HCT116 (cell line): ENCODE measurements at regions of chr13 and their contacts with region 1.

Region 1: GRCh38 chr13:79423801-79424642 is 18.0 kb upstream of the RBM26 start:
- DNase-seq: peak; percentile 28
- ATAC-seq: peak; percentile 61
- H3K4me3 ChIP-seq: no peak overlapping the region
- H3K27ac ChIP-seq: no peak overlapping the region
- H3K4me1 ChIP-seq: no peaks in the 10 kb centered on the region
- H3K27me3 ChIP-seq: no peaks in the 10 kb centered on the region
- CTCF ChIP-seq: peak; percentile 44 to 58 (median 53); a peak in 4 of 6 replicates
- POLR2A ChIP-seq: no peak
- RAD21 ChIP-seq: peak; percentile 67

Region 2: GRCh38 chr13:79480954-79481684 is 57.1 kb after region 1 on chr13 and contains the start of gene NDFIP2:
- CTCF ChIA-PET with region 1: interaction called, 10 read pairs
- POLR2A ChIA-PET with region 1: no interaction called
- RAD21 ChIA-PET with region 1: interaction called in 1 of 2 experiments, 3 read pairs
- intact Hi-C with region 1: no loop called
- DNase-seq: peak; percentile 90
- ATAC-seq: peak; percentile 97
- H3K4me3 ChIP-seq: peak within 1 kb of the TSS; percentile 64 to 95
- H3K27ac ChIP-seq: peak within 1 kb of the TSS; percentile 84
- H3K4me1 ChIP-seq: peaks cover 8 to 39% of the 10 kb centered on the region in 2 experiments
- H3K27me3 ChIP-seq: no peaks in the 10 kb centered on the region
- CTCF ChIP-seq: no peak
- POLR2A ChIP-seq: peak; percentile 64
- RAD21 ChIP-seq: no peak
- total RNA-seq, gene NDFIP2: 49.6 TPM

Region 3: DNA sequence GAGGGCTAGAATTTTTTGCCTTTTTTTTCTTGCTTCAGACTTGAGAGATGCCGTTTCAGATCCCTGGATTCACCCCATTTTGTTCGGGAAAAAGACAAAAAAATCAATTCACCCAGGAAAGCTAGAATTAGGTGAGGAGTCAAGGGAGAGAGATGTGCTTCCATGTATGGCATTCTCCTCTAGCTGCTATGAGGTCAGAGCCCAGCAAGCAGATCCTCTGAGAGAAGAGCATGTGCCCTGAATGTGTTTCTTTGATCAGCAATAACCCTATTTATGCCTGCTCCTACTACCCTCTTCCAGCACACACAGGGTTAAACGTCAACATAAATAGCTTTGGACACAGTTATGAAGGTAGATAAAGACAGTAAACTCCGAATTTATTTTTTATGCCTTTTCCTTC is 110.6 kb after region 1 on chr13:
- CTCF ChIA-PET with region 1: interaction called, 184 read pairs
- POLR2A ChIA-PET with region 1: no interaction called
- RAD21 ChIA-PET with region 1: interaction called in 1 of 2 experiments, 3 read pairs
- intact Hi-C with region 1: no loop called
- DNase-seq: no peak
- ATAC-seq: no peak
- H3K4me3 ChIP-seq: no peak overlapping the region
- H3K27ac ChIP-seq: no peak overlapping the region
- H3K4me1 ChIP-seq: no peaks in the 10 kb centered on the region
- H3K27me3 ChIP-seq: no peaks in the 10 kb centered on the region
- CTCF ChIP-seq: no peak
- POLR2A ChIP-seq: no peak
- RAD21 ChIP-seq: no peak

Region 4: GRCh38 chr13:80830431-80830830 is 1406.4 kb after region 1 on chr13:
- CTCF ChIA-PET with region 1: no interaction called
- POLR2A ChIA-PET with region 1: no interaction called
- RAD21 ChIA-PET with region 1: no interaction called
- intact Hi-C with region 1: no loop called
- DNase-seq: no peak
- ATAC-seq: no peak
- H3K4me3 ChIP-seq: no peak overlapping the region
- H3K27ac ChIP-seq: no peak overlapping the region
- H3K4me1 ChIP-seq: no peaks in the 10 kb centered on the region
- H3K27me3 ChIP-seq: no peaks in the 10 kb centered on the region
- CTCF ChIP-seq: no peak
- POLR2A ChIP-seq: no peak
- RAD21 ChIP-seq: no peak